Adrenal gland (tissue), 19 donors: ENCODE measurements at regions of chr16 and their contacts with region 1.

Region 1: GRCh38 chr16:66406534-66407221 is 20.4 kb upstream of the BEAN1 start:
- DNase-seq: peak; percentile 74 to 94 (median 87)
- H3K4me3 ChIP-seq: peak overlapping the region in 2 of 4 donors; percentile 20 to 59
- H3K27ac ChIP-seq: peak overlapping the region in 1 of 5 donors; percentile 54
- H3K4me1 ChIP-seq: peaks cover 3 to 17% of the 10 kb centered on the region in 2 donors
- H3K27me3 ChIP-seq: no peaks in the 10 kb centered on the region
- CTCF ChIP-seq: peak; percentile 86 to 95 (median 92)
- POLR2A ChIP-seq: no peak

Region 2: DNA sequence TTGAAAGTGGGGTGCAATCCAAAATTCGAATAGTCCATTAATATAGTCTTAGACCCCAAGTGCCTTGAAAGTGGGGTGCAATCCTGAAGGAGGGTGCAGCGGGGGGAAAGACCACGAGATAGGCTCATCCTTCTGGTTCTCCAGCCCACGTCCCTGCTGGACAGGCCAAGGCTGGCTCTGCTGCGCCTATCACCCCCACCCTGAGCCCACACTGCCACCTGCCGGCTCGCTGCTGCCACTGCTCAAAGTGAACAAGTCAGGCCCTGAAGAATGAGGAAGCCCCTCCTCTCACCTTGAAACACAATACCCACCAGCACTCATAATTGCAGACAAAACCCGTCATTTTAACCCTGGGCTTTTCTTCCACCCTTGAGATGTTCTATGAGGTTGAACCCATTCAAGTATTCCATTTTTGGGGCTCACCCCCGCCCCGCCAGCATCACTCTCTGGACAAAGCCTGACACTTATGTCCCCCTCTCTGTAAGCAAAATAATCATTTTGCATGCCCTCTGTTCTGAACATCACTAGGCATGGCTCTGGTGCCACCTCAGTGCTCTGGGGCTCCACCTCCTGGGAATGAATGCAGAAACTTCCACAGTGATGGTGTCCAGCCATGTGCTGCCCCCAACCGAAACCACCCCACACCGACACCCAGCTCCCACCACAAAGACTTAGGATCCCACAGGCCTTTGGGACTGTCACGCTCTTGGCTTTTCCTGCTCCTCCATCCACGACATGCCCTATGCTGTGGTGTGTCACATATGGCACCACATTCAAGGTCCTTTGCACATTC is 77.2 kb after region 1 on chr16:
- intact Hi-C with region 1: loop called (anchors 5 kb)
- DNase-seq: peak; percentile 67 to 86 (median 79)
- H3K4me3 ChIP-seq: no peak overlapping the region
- H3K27ac ChIP-seq: no peak overlapping the region
- H3K4me1 ChIP-seq: peaks cover 0 to 11% of the 10 kb centered on the region in 2 donors
- H3K27me3 ChIP-seq: no peaks in the 10 kb centered on the region
- CTCF ChIP-seq: peak; percentile 86 to 91 (median 88)
- POLR2A ChIP-seq: no peak

Region 3: GRCh38 chr16:66859397-66860068 is 452.9 kb after region 1 on chr16:
- intact Hi-C with region 1: loop called (anchors 10 kb)
- DNase-seq: no peak
- H3K4me3 ChIP-seq: no peak overlapping the region
- H3K27ac ChIP-seq: no peak overlapping the region
- H3K4me1 ChIP-seq: peaks cover 0 to 5% of the 10 kb centered on the region in 2 donors
- H3K27me3 ChIP-seq: no peaks in the 10 kb centered on the region
- CTCF ChIP-seq: no peak
- POLR2A ChIP-seq: no peak